ENCODE measurements at regions of chr4 and their contacts with region 1.

Region 1: GRCh38 chr4:26857278-26858034 is 3.2 kb upstream of the STIM2 start:
- DNase-seq: peak; percentile 83 to 93 (median 89)
- H3K4me3 ChIP-seq: peak overlapping the region; percentile 54 to 94 (median 92)
- H3K4me3 Mint-ChIP-seq: peak overlapping the region; percentile 88
- H3K27ac ChIP-seq: peak overlapping the region; percentile 62 to 63
- H3K27ac Mint-ChIP-seq: peak overlapping the region; percentile 78 to 96 (median 88)
- H3K4me1 ChIP-seq: peaks cover 36 to 44% of the 10 kb centered on the region in 2 donors
- H3K4me1 Mint-ChIP-seq: peaks cover 32% of the 10 kb centered on the region
- H3K27me3 ChIP-seq: no peaks in the 10 kb centered on the region
- H3K27me3 Mint-ChIP-seq: peaks cover 2 to 3% (median 3%) of the 10 kb centered on the region in 3 donors
- CTCF ChIP-seq: no peak

Region 2: DNA sequence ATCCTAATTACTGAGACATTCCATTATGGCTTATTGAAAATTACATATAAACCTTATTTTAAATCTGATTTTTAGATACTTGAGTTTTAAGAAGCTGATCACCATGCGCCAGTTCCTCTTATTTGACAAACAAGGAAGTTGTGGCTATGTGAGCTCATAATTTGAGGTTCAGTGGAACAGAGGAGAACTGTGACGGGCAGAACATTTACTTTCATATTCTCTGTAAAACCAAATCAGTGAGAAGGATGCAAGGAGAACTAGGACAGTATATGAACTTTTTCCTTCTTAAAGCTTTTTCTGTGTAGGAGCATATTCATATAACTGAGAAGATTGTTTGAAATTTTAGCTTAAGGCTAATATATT is 28.4 kb after region 1 on chr4:
- intact Hi-C with region 1: loop called in 1 of 2 experiments (anchors 2 kb)
- DNase-seq: peak; percentile 83 to 92 (median 88)
- H3K4me3 ChIP-seq: peak overlapping the region; percentile 16 to 60 (median 21)
- H3K4me3 Mint-ChIP-seq: peak overlapping the region; percentile 40 to 87
- H3K27ac ChIP-seq: peak overlapping the region in 1 of 2 donors; percentile 78
- H3K27ac Mint-ChIP-seq: peak overlapping the region; percentile 87 to 93 (median 89)
- H3K4me1 ChIP-seq: peaks cover 28 to 41% of the 10 kb centered on the region in 2 donors
- H3K4me1 Mint-ChIP-seq: peaks cover 37% of the 10 kb centered on the region
- H3K27me3 ChIP-seq: no peaks in the 10 kb centered on the region
- H3K27me3 Mint-ChIP-seq: peaks cover 1 to 2% (median 2%) of the 10 kb centered on the region in 3 donors
- CTCF ChIP-seq: no peak

Measured in CD14-positive monocyte (primary cell).